ENCODE measurements at regions of chr15 and their contacts with region 1.

Region 1: DNA sequence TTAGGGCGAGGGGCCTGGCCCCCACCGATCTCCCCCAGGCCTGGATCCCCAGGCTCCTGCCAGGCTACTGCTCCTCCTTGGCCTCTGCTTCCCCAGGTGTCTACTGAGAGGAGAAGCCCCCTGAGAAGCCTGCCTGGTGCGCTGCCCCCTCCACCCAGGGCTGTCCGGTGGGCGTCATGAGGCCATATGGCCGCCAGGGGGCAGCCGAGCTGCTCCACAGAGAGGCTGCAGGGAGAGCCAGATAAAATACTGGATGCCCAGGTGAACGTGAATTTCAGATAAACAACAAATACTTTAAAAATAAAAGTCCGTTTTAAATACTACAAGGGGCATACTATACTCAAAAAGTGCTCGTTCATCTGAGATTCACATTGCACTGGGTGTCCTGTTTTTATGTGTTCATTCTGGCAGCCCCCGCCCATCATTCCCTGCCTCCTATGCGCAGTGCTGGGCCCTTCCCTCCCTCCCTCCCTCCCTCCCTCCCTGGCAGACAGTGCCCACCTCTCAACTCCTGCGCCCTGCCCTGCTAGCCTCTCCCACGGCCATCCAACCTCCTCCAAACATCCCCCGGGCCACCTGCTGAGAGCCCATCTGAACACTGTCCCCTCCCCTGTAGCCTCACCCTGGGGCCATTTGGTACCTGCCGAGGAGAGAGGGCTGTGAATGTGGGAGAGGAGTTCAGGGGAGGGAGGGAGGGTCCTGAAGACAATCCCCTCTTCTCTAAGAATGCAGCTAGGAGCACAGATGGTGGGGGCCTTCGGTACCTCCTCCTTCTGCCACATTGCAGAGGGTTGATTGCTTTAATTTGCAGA is 29.6 kb downstream of the PSTPIP1 start:
- DNase-seq: peak; percentile 39 to 83 (median 71)
- ATAC-seq: no peak
- H3K4me3 ChIP-seq: no peak overlapping the region
- H3K4me3 Mint-ChIP-seq: no peak overlapping the region
- H3K27ac ChIP-seq: peak overlapping the region in 1 of 2 experiments; percentile 85
- H3K27ac Mint-ChIP-seq: peak overlapping the region; percentile 74
- H3K4me1 ChIP-seq: peaks cover 49% of the 10 kb centered on the region
- H3K4me1 Mint-ChIP-seq: peaks cover 56% of the 10 kb centered on the region
- H3K27me3 ChIP-seq: no peaks in the 10 kb centered on the region
- H3K27me3 Mint-ChIP-seq: no peaks in the 10 kb centered on the region
- CTCF ChIP-seq: peak; percentile 96

Region 2: DNA sequence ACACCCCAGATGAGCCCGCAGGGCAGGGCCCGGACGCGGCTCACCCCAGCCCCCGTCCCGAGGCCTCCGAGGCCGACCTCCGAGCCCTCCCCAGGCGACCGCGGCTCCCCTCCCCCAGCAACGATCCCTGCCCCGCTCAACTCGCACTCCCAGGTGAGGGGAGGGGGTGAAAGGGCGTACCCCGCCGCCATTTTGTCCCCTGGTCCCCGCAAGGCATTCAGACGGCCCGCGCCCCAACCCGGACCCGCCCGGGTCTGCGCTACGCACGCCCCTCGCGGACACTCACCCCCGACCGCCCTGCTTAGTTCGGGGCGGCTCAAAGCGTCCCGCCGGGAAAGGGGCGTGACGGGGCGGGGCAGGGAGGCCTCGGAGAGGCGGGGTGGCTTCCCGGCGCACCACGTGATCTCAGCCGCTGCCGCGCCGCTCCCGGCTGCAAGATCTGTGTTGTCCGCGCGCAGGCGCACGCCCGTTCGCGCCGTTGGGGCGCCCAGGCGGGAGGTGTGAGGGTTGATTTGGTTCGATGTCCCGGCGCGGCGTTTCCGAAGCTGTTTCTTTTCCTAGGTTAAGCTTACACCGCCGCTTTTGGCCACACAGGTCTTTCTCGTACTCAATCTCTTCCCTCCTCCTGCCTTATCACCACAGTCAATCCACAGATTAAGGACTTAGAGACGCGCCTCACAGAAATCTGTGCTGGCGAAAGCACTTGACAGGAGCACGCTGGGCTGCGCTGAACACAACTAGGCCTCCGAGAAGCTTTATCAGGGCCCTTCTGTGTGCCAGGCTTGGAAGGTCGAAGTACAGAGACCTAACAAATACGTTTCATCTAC is 119.3 kb before region 1 on chr15 and contains the start of gene SCAPER:
- CTCF ChIA-PET with region 1: interaction called, 5 read pairs
- POLR2A ChIA-PET with region 1: no interaction called
- intact Hi-C with region 1: loop called in 1 of 2 experiments (anchors 2 kb)
- DNase-seq: peak; percentile 72 to 95 (median 92)
- ATAC-seq: peak; percentile 86
- H3K4me3 ChIP-seq: peak within 1 kb of the TSS; percentile 82 to 88
- H3K4me3 Mint-ChIP-seq: peak within 1 kb of the TSS; percentile 91
- H3K27ac ChIP-seq: peak within 1 kb of the TSS; percentile 47 to 81
- H3K27ac Mint-ChIP-seq: peak within 1 kb of the TSS; percentile 96
- H3K4me1 ChIP-seq: peaks cover 24% of the 10 kb centered on the region
- H3K4me1 Mint-ChIP-seq: peaks cover 36% of the 10 kb centered on the region
- H3K27me3 ChIP-seq: no peaks in the 10 kb centered on the region
- H3K27me3 Mint-ChIP-seq: no peaks in the 10 kb centered on the region
- CTCF ChIP-seq: no peak
- total RNA-seq, gene SCAPER: 21.7 to 29.7 TPM

Region 3: DNA sequence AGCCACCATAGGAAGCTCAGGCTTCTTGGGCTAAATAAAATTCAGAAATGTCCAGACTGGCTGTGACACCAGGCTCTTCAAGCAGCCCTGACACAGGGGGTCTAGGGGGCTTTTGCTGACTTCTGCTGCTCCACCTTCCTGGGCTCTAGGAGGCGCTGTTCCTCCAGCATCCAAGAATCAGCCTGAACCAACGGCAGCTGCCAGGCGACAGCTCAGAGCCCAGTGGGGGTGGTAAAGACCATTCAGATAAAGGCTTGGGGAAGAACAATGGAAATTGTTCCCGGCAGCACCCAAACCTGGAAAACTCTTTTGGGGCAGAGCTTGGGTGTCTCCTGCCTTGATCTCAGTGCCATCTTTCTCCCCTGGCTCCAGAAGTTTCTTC is 51.1 kb before region 1 on chr15:
- CTCF ChIA-PET with region 1: interaction called, 97 read pairs
- POLR2A ChIA-PET with region 1: interaction called, 4 read pairs
- intact Hi-C with region 1: loop called in 1 of 2 experiments (anchors 1 kb)
- DNase-seq: peak; percentile 39 to 85 (median 75)
- ATAC-seq: peak; percentile 84
- H3K4me3 ChIP-seq: no peak overlapping the region
- H3K4me3 Mint-ChIP-seq: no peak overlapping the region
- H3K27ac ChIP-seq: no peak overlapping the region
- H3K27ac Mint-ChIP-seq: no peak overlapping the region
- H3K4me1 ChIP-seq: peaks cover 4% of the 10 kb centered on the region
- H3K4me1 Mint-ChIP-seq: peaks cover 14% of the 10 kb centered on the region
- H3K27me3 ChIP-seq: no peaks in the 10 kb centered on the region
- H3K27me3 Mint-ChIP-seq: no peaks in the 10 kb centered on the region
- CTCF ChIP-seq: peak; percentile 86

Region 4: DNA sequence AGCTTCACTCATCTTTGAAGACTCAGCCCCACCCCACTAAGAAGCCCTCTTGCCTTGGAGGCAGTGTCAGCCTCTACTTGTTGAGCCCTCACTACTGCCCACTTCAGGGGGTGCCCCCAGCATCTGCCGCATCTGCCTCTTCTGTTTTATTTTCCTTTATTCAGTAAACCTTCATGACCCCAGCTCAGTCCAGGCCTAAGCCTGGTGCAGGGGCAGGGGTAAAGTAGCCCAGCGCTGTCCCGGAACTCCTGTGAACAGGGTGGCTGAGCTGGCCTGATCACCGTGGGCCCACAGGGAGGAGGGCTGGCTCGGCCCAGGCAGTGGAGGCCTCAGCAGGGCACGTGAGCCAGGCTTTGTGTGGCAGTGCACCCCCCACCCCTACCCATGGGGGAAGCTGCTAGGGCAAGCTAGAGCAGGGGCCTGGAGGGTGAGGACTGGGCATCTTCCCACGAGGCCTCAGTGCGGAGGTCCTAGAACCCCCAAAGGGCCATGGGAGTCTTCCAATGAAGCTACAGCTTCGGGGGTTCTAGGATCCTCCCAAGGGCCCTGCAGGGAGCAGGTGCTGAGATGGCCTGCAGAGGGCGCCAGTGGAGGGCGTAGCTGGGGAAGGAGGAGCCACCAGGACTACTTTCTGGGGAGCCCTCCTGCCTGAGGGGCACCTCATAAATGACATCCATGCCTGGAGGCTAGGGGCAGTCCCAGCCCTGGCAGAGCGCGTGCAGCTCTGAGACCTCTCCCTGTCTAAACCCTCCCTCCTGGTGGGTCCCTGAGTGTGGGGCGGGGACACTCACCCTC is 10.4 kb after region 1 on chr15:
- CTCF ChIA-PET with region 1: interaction called, 19 read pairs
- POLR2A ChIA-PET with region 1: no interaction called
- intact Hi-C with region 1: no loop called
- DNase-seq: peak in 6 of 9 experiments; percentile 51 to 64 (median 60)
- ATAC-seq: peak; percentile 63
- H3K4me3 ChIP-seq: no peak overlapping the region
- H3K4me3 Mint-ChIP-seq: no peak overlapping the region
- H3K27ac ChIP-seq: peak overlapping the region in 1 of 2 experiments; percentile 36
- H3K27ac Mint-ChIP-seq: peak overlapping the region; percentile 72
- H3K4me1 ChIP-seq: no peaks in the 10 kb centered on the region
- H3K4me1 Mint-ChIP-seq: peaks cover 3% of the 10 kb centered on the region
- H3K27me3 ChIP-seq: no peaks in the 10 kb centered on the region
- H3K27me3 Mint-ChIP-seq: no peaks in the 10 kb centered on the region
- CTCF ChIP-seq: peak; percentile 31

Region 5: DNA sequence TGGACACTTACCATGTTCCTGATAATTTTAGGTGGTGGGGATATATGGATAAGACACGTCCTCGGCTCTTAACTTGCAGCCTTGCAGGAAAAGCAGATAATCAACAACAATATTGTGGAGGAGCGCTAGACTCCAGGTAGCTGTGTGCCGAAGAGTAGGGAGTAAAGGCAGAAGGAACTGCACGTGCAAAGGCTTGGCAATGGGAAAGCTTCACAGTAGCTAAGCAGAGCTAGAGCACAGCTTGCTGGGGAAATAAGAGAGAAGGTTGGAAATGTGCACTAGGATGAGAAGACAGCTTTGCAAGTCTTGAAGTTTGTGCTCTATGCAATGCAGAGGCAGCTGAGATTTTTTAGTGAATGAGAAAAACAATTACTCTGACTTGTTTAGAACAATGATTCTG is 1528.1 kb after region 1 on chr15:
- CTCF ChIA-PET with region 1: no interaction called
- POLR2A ChIA-PET with region 1: no interaction called
- intact Hi-C with region 1: no loop called
- DNase-seq: no peak
- ATAC-seq: no peak
- H3K4me3 ChIP-seq: no peak overlapping the region
- H3K4me3 Mint-ChIP-seq: no peak overlapping the region
- H3K27ac ChIP-seq: no peak overlapping the region
- H3K27ac Mint-ChIP-seq: no peak overlapping the region
- H3K4me1 ChIP-seq: no peaks in the 10 kb centered on the region
- H3K4me1 Mint-ChIP-seq: no peaks in the 10 kb centered on the region
- H3K27me3 ChIP-seq: no peaks in the 10 kb centered on the region
- H3K27me3 Mint-ChIP-seq: no peaks in the 10 kb centered on the region
- CTCF ChIP-seq: no peak